ENCODE measurements at regions of chr14 and their contacts with region 1.

Region 1: GRCh38 chr14:52131640-52132320 is 62.9 kb upstream of the NID2 start:
- DNase-seq: peak in 1 of 2 donors; percentile 71
- ATAC-seq: peak in 2 of 3 donors; percentile 65 to 75
- H3K4me3 ChIP-seq: no peak overlapping the region
- H3K4me3 Mint-ChIP-seq: peak overlapping the region; percentile 41
- H3K27ac ChIP-seq: no peak overlapping the region
- H3K27ac Mint-ChIP-seq: no peak overlapping the region
- H3K4me1 ChIP-seq: peaks cover 8% of the 10 kb centered on the region
- H3K4me1 Mint-ChIP-seq: peaks cover 14 to 19% of the 10 kb centered on the region in 2 donors
- H3K27me3 ChIP-seq: no peaks in the 10 kb centered on the region
- H3K27me3 Mint-ChIP-seq: peaks cover 8 to 11% of the 10 kb centered on the region in 2 donors
- CTCF ChIP-seq: peak; percentile 47

Region 2: GRCh38 chr14:51996148-51996746 is 135.5 kb before region 1 on chr14:
- intact Hi-C with region 1: loop called (anchors 2 kb)
- DNase-seq: peak in 1 of 2 donors; percentile 72
- ATAC-seq: peak in 2 of 3 donors; percentile 50 to 57
- H3K4me3 ChIP-seq: no peak overlapping the region
- H3K4me3 Mint-ChIP-seq: no peak overlapping the region
- H3K27ac ChIP-seq: no peak overlapping the region
- H3K27ac Mint-ChIP-seq: peak overlapping the region in 1 of 2 donors; percentile 68
- H3K4me1 ChIP-seq: no peaks in the 10 kb centered on the region
- H3K4me1 Mint-ChIP-seq: peaks cover 7 to 10% of the 10 kb centered on the region in 2 donors
- H3K27me3 ChIP-seq: no peaks in the 10 kb centered on the region
- H3K27me3 Mint-ChIP-seq: no peaks in the 10 kb centered on the region
- CTCF ChIP-seq: peak; percentile 86